Left cardiac atrium (tissue), 4 donors: ENCODE measurements at regions of chr12 and their contacts with region 1.

Region 1: DNA sequence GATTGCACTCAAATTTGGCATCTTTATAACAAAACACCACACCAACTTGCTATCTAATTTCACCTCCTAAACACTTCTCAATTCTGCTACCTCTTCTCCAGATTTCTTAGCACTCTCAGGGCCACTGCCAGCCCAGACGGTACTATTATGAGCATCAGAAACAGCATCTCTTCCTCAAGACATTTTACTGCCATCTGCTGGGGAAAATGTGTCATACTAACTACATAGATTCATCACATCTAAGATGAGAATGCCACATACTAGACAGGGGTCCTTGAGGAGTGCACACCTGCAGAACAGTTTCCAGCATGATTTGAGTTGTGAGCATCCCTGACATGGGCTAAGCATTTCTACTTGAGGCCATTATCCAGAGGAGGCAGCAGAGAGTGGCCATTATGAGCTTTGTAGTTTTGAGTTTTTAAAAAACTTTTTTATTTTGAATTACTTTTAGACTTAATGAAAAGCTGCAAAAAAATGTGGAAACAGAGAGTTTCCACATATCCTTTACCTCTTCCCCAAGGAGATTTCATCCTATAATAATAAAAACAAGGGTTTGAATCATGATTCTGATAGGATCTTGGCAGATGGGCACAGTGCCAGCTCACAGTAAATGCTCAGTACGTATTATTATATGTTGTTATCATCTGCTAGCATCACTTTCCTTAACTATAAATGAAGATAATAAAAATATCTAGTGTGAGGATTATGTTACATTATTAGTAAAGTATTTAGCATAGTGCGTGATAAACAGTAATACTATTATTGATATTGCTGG is 15.2 kb upstream of the GRIP1 start:
- DNase-seq: peak; percentile 24
- ATAC-seq: peak; percentile 61 to 83

Region 2: GRCh38 chr12:66269757-66270383 is 424.2 kb before region 1 on chr12:
- intact Hi-C with region 1: loop called in 1 of 2 experiments (anchors 10 kb)
- DNase-seq: no peak
- ATAC-seq: peak; percentile 53 to 60

Region 3: DNA sequence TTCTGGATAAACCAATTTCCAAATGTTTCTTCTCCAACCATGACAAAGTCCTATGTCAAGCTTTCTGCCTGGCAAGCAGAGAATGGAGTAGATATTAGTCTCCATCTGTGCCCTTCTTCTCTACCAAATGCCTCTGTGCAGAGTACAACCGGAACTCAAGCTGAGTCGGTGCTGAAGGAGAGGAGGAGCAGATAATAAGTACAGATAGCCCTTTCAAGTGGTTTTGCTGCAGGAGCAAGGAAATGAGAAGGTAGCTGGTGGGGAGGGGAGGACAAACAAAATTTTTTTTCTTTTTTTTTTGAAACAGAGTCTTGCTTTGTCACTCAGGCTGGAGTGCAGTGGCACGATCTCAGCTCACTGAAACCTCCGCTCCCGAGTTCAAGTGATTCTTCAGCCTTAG is 406.0 kb before region 1 on chr12:
- intact Hi-C with region 1: loop called in 1 of 2 experiments (anchors 10 kb)
- DNase-seq: no peak
- ATAC-seq: peak in 1 of 2 donors; percentile 44

Region 4: GRCh38 chr12:66860752-66861750 is 167.0 kb after region 1 on chr12:
- intact Hi-C with region 1: loop called (anchors 2 to 10 kb)
- DNase-seq: peak; percentile 44
- ATAC-seq: peak; percentile 41 to 49